ENCODE measurements at regions of chr4 and their contacts with region 1.

Region 1: DNA sequence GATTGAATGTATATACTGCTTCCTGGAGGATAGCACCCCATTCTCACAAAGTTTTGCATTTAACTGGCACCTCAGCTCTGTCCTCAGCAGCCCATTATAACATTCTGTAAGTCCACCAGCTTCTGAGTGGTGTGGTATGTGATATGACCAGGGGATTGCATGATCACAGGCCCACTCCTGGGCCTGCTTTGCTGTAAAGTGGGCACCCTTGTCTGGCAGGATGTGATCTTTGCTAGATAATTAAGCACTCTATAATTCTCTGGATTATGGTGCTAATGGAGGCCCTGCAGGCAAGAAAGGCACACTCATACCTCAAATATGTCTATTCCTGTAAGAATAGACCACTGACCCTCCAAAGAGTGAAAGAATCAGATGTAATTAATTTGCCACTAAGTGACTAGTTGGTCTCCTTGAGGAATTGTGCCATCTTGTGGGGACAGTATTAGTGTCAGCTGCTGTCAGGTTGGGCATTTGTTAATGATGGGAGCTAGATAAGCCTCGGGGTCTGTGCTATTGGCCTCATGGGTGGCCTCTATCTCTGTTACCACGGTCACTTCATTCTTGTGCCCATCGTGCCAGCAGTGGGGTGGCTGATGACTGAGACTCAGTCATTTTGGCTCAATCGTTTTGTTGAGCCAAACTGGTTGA is 2.2 kb upstream of the CFI start:
- DNase-seq: no peak
- ATAC-seq: peak in 1 of 8 donors; percentile 35
- H3K4me3 ChIP-seq: no peak overlapping the region
- H3K27ac ChIP-seq: no peak overlapping the region
- H3K4me1 ChIP-seq: peaks cover 0 to 13% (median 3%) of the 10 kb centered on the region in 9 donors
- H3K27me3 ChIP-seq: no peaks in the 10 kb centered on the region
- CTCF ChIP-seq: peak in 7 of 9 donors; percentile 37 to 55 (median 41)

Region 2: DNA sequence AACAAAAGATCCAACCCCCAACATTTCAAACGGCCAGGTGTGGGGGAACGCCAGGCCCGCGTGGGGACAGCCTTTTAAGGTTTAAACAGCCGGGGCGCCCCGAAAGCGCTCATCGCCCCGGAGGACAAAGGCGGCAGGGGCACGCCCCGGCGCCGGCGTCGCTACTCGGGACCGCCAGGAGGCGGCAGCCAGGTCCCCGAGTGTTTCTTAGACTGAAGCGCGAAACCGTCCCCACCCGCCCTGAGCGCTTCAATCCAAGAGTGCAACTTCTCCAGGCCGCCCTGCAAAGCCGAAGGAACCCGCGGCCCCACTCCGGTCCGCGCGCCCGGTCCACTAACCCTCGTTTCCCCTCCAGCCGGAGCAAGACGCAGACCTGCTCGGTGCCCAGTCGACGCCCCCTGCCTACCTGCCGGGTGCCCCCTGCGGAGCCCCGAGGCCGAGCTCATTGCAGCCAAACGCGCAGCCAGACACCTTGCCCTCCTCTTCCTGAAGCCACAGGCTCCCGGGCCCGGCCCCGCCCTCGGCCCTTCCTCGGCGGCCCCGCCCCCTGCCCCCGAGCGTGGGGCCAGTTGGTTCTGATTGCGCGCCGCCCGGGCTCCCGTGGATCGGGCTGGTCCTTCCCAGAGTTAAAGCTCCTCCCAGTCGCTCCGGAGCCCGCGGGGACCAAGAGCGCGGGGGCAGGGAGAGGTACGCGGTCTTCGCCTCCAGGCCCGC is 100.9 kb before region 1 on chr4 and contains the start of gene CASP6:
- intact Hi-C with region 1: loop called in 3 of 10 experiments (anchors 5 to 10 kb)
- DNase-seq: peak; percentile 85 to 89
- ATAC-seq: peak; percentile 93 to 98 (median 96)
- H3K4me3 ChIP-seq: peak within 1 kb of the TSS; percentile 64 to 96 (median 86)
- H3K27ac ChIP-seq: peak within 1 kb of the TSS; percentile 63 to 87 (median 81)
- H3K4me1 ChIP-seq: peaks cover 2 to 26% (median 15%) of the 10 kb centered on the region in 9 donors
- H3K27me3 ChIP-seq: no peaks in the 10 kb centered on the region
- CTCF ChIP-seq: peak; percentile 59 to 88 (median 78)
- total RNA-seq, gene CASP6: 3.0 to 10.2 (median 6.2) TPM

Region 3: GRCh38 chr4:109729718-109730618 is 74.1 kb before region 1 on chr4 and contains the start of gene PLA2G12A:
- intact Hi-C with region 1: loop called in 2 of 10 experiments (anchors 5 kb)
- DNase-seq: peak; percentile 46 to 67
- ATAC-seq: peak; percentile 93 to 98 (median 96)
- H3K4me3 ChIP-seq: peak within 1 kb of the TSS; percentile 72 to 100 (median 92)
- H3K27ac ChIP-seq: peak within 1 kb of the TSS; percentile 28 to 92 (median 83)
- H3K4me1 ChIP-seq: peaks cover 0 to 24% (median 14%) of the 10 kb centered on the region in 9 donors
- H3K27me3 ChIP-seq: no peaks in the 10 kb centered on the region
- CTCF ChIP-seq: no peak
- total RNA-seq, gene PLA2G12A: 39.4 to 100 (median 50.3) TPM

Region 4: DNA sequence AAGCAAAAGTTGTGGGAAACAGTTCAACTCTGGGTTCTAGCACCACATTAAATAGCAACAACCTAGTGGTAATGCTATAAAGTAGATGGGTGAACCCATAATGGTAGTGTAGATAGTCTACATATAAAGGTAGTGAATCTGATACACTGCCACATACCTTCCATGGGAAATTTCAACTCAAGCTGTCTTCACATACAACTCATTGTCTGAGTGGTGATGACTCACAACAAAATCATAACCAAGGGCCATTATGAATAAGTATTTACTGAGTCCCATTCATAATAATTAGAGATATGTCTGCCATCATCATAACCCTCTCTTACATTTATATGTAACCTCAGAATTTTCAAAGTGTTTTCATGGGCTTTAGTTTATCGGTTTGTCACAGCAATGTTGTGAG is 143.4 kb after region 1 on chr4:
- intact Hi-C with region 1: no loop called
- DNase-seq: no peak
- ATAC-seq: no peak
- H3K4me3 ChIP-seq: no peak overlapping the region
- H3K27ac ChIP-seq: no peak overlapping the region
- H3K4me1 ChIP-seq: no peaks in the 10 kb centered on the region
- H3K27me3 ChIP-seq: no peaks in the 10 kb centered on the region
- CTCF ChIP-seq: no peak